Ascending aorta (tissue), 2 donors: ENCODE measurements at regions of chr13 and their contacts with region 1.

Region 1: DNA sequence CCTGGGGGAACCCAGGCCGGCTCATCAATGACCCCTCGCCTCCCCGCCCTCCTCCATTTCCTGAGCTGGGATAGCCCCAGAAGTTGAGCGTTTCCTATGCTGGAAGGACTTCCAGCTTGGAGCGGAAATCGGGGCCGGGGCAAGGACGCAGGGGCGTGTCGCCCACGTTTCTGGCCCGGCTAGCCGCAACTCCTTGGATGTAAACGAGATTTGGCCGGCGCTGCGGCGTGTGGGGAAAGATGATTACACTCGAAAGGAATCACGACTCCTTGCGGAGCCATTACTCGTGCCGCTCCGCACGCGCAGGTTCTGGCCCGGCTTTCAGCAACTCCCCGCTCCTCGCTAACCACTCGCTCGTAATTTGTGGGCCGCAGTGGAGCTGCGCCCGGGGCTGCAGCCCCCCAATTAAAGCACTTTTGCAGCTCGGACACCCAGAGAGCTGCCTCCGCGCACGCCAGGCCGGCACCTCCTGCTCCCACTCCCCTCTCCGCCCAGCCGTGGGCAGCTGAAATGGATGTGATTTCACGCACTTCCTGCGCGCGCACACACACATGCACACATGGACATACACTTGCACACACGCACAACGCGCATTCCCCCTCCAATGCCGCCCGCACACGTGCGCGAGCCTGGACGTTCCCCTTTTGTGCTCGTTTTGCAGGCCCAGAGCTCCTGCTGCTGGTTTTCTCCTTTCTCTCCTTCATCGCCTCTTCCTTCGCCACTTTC is 15.7 kb downstream of the ZIC5 start:
- DNase-seq: no peak
- H3K4me3 ChIP-seq: peak overlapping the region; percentile 41 to 46
- H3K27ac ChIP-seq: no peak overlapping the region
- H3K4me1 ChIP-seq: peaks cover 2 to 25% of the 10 kb centered on the region in 2 donors
- H3K27me3 ChIP-seq: peaks cover 35% of the 10 kb centered on the region
- CTCF ChIP-seq: no peak

Region 2: DNA sequence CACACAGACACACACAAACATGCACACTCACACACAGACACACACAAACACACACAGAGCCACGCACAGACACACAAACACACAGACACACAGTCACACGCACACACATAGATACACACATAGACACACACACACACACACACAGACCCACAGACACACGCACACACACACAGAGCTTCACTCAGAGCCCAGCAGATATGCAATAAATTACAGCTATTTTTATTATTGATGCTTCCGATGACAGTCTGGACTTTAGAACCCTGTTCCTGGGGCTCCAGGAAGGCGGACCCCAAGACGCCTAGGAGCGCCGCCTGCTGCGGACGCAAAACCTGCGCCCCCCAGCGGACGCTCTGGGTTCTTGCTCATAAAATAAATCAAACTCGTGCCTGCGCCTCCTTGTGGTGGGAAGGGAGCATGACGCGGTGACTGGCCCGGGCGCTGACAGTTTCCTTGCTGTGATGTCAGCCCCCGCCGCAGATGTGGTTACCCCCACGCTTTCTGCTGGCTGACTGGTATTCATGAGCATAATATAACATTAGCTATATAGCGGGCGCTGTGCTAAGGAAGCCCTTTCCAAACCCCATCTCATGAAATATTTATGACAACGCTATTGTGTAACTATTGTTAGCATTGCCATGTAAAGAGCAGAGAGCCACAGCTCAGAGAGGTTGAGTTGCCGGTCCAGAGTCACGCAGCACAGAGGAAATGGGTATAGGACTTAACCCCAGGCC is 519.1 kb before region 1 on chr13:
- intact Hi-C with region 1: no loop called
- DNase-seq: peak; percentile 33 to 93
- H3K4me3 ChIP-seq: no peak overlapping the region
- H3K27ac ChIP-seq: no peak overlapping the region
- H3K4me1 ChIP-seq: no peaks in the 10 kb centered on the region
- H3K27me3 ChIP-seq: no peaks in the 10 kb centered on the region
- CTCF ChIP-seq: peak; percentile 99 to 100 (median 99)

Region 3: DNA sequence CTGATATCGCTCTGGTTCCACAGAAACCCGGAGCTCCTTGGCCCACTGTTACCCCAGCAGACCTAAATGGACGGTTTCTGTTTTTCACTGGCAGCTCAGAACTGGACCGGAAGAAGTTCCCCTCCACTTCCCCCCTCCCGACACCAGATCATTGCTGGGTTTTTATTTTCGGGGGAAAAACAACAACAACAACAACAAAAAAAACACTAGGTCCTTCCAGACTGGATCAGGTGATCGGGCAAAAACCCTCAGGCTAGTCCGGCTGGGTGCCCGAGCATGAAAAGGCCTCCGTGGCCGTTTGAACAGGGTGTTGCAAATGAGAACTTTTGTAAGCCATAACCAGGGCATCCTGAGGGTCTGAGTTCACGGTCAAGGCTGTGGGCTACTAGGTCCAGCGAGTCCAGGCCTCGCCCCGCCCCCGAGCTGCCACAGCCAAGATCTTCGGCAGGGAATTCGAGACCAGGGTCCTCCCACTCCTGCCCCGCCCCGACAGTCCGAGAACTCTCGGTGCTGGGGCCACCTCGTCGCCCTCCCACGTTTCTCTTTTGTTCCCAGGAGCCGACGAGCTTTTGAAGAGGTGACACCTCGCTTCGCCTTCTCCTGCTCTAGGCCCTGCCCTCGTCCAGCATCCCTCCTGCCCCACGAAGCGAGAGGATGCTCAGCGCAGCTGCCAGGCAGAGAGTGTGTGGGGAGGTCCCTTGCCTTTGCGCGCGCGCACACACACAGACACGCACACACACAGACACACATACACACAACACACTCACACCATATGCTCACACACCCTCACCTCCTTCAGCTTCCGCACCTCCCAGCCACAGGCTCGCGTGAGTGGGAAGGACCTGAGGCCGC is 34.4 kb after region 1 on chr13:
- intact Hi-C with region 1: loop called (anchors 5 kb)
- DNase-seq: no peak
- H3K4me3 ChIP-seq: peak overlapping the region in 1 of 2 donors; percentile 4
- H3K27ac ChIP-seq: no peak overlapping the region
- H3K4me1 ChIP-seq: no peaks in the 10 kb centered on the region
- H3K27me3 ChIP-seq: peaks cover 61% of the 10 kb centered on the region
- CTCF ChIP-seq: no peak